Mammary epithelial cell (primary cell): ENCODE measurements at regions of chr1 and their contacts with region 1.

Region 1: DNA sequence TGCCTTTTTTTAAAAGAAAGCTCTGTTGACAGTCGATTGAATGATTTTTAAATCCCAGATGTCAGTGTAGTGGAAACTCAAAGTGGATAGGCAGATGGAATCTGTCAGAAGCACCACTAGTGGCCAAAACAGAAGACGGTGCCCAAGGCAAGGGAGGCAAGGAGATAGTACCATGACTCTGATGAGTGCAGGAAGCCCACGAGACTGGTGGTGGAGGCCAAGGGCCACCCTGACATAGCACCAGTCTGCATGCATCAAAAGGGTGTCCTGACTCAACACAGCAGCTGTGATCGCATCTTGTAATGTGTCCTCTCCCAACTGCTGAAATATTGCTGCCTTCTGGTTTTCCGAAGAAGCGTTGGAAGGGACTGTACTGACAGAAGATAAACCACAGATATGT is 124.1 kb upstream of the PAPPA2 start:
- DNase-seq: no peak
- H3K4me3 ChIP-seq: no peak overlapping the region
- H3K27ac ChIP-seq: no peak overlapping the region
- H3K4me1 ChIP-seq: no peaks in the 10 kb centered on the region
- H3K27me3 ChIP-seq: no peaks in the 10 kb centered on the region
- CTCF ChIP-seq: no peak

Region 2: GRCh38 chr1:176119549-176119948 is 219.3 kb before region 1 on chr1:
- CTCF ChIA-PET with region 1: no interaction called
- dilution Hi-C with region 1: no loop called
- in situ Hi-C with region 1: no loop called
- intact Hi-C with region 1: loop called (anchors 10 kb)
- DNase-seq: peak; percentile 3
- H3K4me3 ChIP-seq: no peak overlapping the region
- H3K27ac ChIP-seq: no peak overlapping the region
- H3K4me1 ChIP-seq: no peaks in the 10 kb centered on the region
- H3K27me3 ChIP-seq: no peaks in the 10 kb centered on the region
- CTCF ChIP-seq: peak in 1 of 2 donors; percentile 42